Posterior cingulate gyrus (tissue), 11 donors: ENCODE measurements at regions of chr1 and their contacts with region 1.

Region 1: GRCh38 chr1:6701437-6702153 is at the start of gene DNAJC11:
- DNase-seq: peak; percentile 88 to 98 (median 90)

Region 2: DNA sequence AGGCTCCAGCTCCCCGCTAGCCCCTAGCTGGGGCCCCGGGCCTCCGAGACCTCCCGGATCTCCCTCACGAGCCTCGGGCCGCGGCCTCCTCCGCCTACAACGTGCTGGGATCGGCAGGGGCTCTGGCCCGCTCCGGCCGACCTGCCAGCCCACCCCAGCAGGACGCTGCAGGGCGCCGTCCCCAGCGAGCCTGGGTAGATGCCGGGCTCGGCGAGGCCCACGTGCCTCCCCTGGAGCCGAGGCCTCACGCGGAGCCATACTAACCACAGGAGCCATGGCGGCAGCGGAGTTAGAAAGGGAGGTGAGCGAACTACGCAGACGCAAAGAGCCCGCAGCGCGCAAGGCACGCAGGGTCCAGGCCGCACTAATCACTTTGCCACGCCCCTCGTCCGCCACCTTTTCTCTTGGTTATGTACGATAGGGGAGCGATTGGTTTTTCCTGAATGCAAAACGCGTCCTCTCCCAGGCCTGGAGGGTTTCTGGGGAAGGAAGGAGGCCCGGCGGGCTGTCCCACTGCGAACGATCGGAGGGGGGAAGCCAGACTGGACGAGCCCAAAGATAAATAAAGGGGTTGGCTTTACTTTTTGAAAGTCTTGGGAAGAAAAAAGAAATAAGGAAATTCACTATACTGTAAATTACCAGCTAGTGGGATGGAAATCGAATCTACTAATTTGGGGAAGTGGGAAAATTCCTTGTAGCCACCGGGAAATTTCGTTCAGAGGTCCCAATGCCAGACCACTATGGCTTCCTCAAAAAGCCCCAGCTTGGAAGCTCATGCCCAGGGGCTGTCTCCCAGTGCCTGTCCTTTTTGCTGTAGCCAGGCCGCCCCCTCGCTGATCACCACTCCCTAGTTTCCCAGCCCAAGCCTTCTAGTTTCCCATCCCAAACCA is 502.1 kb before region 1 on chr1 and contains the start of gene RPL22:
- intact Hi-C with region 1: no loop called
- DNase-seq: peak; percentile 96 to 100 (median 98)

Region 3: DNA sequence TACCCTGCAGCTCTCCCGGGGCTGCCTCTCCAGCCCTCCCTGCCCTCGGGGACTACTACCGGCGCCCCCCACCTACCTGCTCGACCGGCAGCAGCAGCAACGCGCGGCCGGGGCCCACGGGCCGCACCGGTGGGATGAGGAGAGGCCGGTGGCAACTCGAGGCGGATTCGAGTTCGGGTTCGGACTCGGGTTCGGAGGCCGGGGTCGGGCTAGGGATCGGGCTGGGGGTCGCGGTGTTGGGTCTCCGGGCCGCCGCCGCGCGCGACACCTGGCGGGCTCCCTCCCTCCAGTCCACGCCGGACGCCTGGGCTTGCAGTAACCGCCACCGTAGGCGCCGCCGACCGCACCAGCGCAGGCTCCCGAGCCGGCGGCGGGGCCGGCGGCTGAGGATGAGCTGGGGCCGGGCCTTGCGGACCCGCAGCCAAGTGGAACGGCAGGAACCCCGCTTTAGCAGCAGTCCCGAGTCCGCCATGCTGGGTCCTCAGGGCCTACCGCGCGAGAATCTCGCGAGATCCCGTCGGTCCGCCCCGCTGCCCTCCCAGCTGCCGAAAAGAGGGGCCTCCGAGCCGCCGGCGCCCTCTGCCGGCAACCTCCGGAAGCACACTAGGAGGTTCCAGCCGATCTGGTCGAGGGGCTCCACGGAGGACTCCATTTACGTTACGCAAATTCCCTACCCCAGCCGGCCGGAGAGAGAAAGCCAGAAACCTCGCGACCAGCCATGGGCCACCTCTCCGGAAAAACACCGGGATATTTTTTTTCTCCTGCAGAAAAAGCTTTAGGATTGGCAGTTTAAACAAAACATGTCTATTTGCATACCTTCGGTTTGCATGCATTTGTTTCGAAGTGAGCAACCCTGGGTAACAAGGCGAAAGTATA is 147.3 kb before region 1 on chr1 and contains the start of gene NOL9:
- intact Hi-C with region 1: loop called (anchors 1 kb)
- DNase-seq: peak; percentile 87 to 99 (median 94)

Region 4: DNA sequence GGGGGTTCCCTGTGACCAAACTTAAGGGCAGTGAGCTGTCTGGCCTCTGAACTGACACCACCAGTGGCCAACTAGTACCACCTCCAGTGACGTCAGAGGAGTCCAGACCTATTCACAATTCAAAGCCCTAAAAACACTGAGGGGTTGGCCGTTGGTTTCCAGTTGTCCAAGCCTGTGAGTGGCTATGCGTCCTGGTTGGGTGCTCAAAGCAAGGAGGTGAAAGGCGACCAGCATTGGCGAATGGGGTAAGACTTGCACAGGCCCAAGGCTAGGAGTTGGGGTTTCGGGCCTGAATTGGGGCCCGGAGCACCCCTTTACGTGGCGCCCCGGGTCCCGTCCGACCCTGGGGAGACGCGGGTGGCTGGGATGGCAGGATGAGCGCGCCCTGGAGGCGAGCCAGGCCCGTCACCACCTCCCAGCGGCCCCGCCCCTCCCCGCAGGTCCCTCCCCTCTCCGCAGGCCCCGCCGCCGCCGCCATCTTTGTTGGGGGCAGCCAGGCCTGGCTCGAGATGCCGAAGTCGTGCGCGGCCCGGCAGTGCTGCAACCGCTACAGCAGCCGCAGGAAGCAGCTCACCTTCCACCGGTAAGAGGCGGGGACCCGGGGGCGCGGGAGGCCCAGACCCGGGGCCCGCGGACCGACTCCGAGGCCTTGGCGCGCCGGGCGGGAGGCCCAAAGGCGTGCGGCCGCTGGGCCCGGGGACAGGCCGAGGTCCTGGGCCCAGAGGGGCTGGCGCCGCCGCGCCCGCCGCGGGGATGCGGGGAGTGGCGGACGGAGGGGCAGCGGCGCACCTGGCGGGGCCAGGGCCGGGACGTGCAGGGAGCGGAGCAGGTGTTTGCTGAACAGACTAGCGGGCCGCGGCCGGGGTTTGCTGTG is 76.6 kb before region 1 on chr1 and contains the start of gene THAP3:
- intact Hi-C with region 1: loop called (anchors 10 kb)
- DNase-seq: peak; percentile 69 to 97 (median 82)

Region 5: DNA sequence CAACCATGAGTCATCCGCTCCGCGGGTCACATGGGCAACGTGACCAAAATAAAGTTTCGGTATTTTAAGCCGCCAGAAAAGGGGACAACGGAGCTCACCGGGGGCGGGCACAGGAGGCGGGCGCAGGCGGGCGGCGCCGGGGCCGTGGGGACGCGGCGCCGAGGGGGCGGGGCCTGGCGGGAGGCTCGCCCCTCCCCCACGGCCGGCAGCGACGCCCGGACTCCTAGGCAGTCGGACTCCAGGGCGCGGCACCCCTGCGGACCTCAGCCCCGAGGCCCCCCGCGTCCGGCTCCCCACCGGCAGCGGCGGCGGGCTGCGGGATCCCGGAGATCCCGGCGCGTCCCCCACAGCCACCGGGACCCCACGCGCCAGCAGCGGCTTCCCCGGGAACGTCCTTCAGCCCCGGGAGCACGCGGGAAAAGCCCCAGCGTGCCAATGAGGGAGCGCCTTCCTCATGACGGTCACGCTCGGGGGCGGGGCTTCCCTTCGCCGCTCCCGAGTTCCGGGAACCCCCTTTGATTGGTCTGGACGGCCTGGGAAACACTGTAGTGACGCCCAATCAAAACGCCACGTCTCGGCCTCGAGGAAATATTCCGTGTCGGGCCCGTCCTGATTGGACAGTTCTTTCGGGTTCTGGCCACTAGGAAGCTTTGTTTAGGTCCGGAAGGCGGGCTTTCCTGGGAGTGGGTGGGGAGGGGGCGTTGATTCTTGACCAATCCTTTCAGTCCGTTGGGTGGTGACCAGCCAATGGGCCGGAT is 83.1 kb after region 1 on chr1:
- intact Hi-C with region 1: loop called (anchors 5 kb)
- DNase-seq: peak; percentile 99 to 100 (median 100)